Ovary (tissue), 10 donors: ENCODE measurements at regions of chr2 and their contacts with region 1.

Region 1: GRCh38 chr2:188512456-188512855 is 220.8 kb downstream of the GULP1 start:
- DNase-seq: no peak
- H3K4me3 ChIP-seq: no peak overlapping the region
- H3K27ac ChIP-seq: no peak overlapping the region
- H3K4me1 ChIP-seq: no peaks in the 10 kb centered on the region
- H3K27me3 ChIP-seq: no peaks in the 10 kb centered on the region
- CTCF ChIP-seq: peak in 2 of 3 donors; percentile 44 to 52
- EP300 ChIP-seq: no peak
- POLR2A ChIP-seq: no peak

Region 2: GRCh38 chr2:187499941-187500532 is 1012.4 kb before region 1 on chr2:
- intact Hi-C with region 1: loop called in 2 of 4 experiments (anchors 10 kb)
- DNase-seq: peak; percentile 35 to 70 (median 61)
- H3K4me3 ChIP-seq: no peak overlapping the region
- H3K27ac ChIP-seq: no peak overlapping the region
- H3K4me1 ChIP-seq: no peaks in the 10 kb centered on the region
- H3K27me3 ChIP-seq: no peaks in the 10 kb centered on the region
- CTCF ChIP-seq: peak; percentile 59 to 88 (median 84)
- EP300 ChIP-seq: no peak
- POLR2A ChIP-seq: no peak

Region 3: DNA sequence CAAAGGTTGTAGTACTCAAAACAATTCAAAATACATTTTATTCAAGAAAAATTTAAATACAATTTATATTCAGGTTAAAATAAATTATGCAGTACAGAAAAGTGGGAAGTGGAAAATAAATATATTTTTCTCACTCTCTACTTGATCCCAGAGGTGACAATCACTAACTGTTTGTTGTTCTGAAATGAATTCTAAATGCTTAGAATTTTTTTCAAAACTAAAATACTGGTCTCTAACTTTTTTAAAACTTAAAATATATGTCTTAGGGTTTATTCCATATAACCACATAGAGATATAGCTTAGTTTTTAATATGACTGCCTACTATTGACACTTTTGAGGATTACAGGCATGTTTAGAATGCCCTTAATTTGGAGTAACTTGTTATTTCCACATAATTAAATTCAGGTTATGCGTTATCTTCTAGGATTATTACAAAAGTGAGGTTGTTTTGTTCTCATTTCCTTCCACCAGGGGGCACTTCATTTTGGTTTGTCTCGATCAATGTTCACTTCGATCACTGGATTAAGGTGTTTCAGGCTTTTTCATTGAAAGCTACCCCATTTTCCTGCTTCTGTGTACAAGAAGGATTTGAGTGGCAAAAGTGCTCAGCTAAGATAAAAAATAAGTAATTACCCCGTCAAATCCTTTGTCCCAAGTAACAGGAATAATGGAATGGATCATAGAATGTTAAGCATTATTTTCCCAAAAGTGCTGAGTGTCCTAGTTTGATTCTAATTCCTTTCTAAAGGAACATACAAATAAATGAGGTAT is 931.1 kb before region 1 on chr2:
- intact Hi-C with region 1: loop called in 1 of 4 experiments (anchors 10 kb)
- DNase-seq: no peak
- H3K4me3 ChIP-seq: peak overlapping the region; percentile 4
- H3K27ac ChIP-seq: no peak overlapping the region
- H3K4me1 ChIP-seq: no peaks in the 10 kb centered on the region
- H3K27me3 ChIP-seq: no peaks in the 10 kb centered on the region
- CTCF ChIP-seq: peak; percentile 56 to 79 (median 75)
- EP300 ChIP-seq: no peak
- POLR2A ChIP-seq: no peak

Region 4: GRCh38 chr2:188291617-188292347 is 220.7 kb before region 1 on chr2 and contains the start of gene GULP1:
- intact Hi-C with region 1: loop called in 3 of 4 experiments (anchors 10 kb)
- DNase-seq: peak; percentile 78 to 87 (median 80)
- H3K4me3 ChIP-seq: peak within 1 kb of the TSS; percentile 59
- H3K27ac ChIP-seq: peak within 1 kb of the TSS; percentile 96 to 100
- H3K4me1 ChIP-seq: peaks cover 2% of the 10 kb centered on the region
- H3K27me3 ChIP-seq: no peaks in the 10 kb centered on the region
- CTCF ChIP-seq: peak; percentile 58 to 65 (median 64)
- EP300 ChIP-seq: no peak
- POLR2A ChIP-seq: no peak
- total RNA-seq, gene GULP1: 41.7 to 57.7 (median 44.9) TPM